ENCODE measurements at regions of chr22 and their contacts with region 1.

Region 1: GRCh38 chr22:30754971-30755756 is 60.5 kb downstream of the OSBP2 start:
- DNase-seq: peak; percentile 58
- H3K4me3 ChIP-seq: no peak overlapping the region
- H3K27ac ChIP-seq: no peak overlapping the region
- H3K4me1 ChIP-seq: no peaks in the 10 kb centered on the region
- H3K27me3 ChIP-seq: no peaks in the 10 kb centered on the region
- CTCF ChIP-seq: peak; percentile 63

Region 2: GRCh38 chr22:30634471-30635233 is 120.5 kb before region 1 on chr22:
- CTCF ChIA-PET with region 1: interaction called, 32 read pairs
- POLR2A ChIA-PET with region 1: no interaction called
- intact Hi-C with region 1: loop called (anchors 1 kb)
- DNase-seq: peak; percentile 89
- H3K4me3 ChIP-seq: peak overlapping the region; percentile 63
- H3K27ac ChIP-seq: no peak overlapping the region
- H3K4me1 ChIP-seq: peaks cover 16% of the 10 kb centered on the region
- H3K27me3 ChIP-seq: no peaks in the 10 kb centered on the region
- CTCF ChIP-seq: peak; percentile 97

Region 3: GRCh38 chr22:30881361-30882183 is 126.4 kb after region 1 on chr22:
- CTCF ChIA-PET with region 1: no interaction called
- POLR2A ChIA-PET with region 1: no interaction called
- intact Hi-C with region 1: no loop called
- DNase-seq: no peak
- H3K4me3 ChIP-seq: no peak overlapping the region
- H3K27ac ChIP-seq: no peak overlapping the region
- H3K4me1 ChIP-seq: peaks cover 21% of the 10 kb centered on the region
- H3K27me3 ChIP-seq: no peaks in the 10 kb centered on the region
- CTCF ChIP-seq: no peak

Measured in A673 (cell line).